GM12878 (cell line): ENCODE measurements at regions of chr2 and their contacts with region 1.

Region 1: DNA sequence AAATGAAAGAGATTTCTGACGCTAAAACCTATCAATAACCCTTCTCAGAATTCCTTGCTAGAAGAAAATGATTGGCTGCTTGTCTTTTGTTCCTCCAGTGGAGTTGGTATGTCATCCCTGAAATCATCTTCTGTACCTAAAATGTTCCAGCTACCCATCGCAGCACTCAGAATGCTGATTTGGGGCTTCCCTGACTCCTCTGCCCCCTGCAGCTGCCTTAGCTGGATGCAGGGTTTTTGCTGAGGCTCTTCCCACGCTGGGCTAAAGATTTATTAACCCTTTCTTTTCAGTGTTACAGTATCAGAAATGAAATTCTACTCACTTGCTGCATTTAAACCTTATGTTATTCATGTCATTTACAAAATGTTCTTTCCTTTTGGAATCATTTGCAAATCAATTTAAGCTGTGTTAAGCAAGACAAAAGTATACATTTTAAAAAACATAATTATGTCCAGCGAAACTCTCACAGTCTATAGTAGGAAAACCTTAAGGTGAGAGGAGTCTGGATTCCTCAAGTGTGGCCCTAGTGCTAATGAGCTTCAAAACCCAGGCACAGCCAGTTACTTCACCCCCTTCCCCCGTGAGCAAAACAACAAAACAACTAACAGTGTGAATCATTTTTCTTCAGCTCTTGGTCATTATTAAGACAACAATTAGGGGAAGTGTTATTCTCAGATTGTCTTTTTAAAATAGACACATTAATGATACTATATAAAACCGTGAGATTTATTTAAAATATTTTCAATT is 32.8 kb downstream of the PKP4 start:
- DNase-seq: no peak
- ATAC-seq: no peak
- H3K4me3 ChIP-seq: no peak overlapping the region
- H3K27ac ChIP-seq: no peak overlapping the region
- H3K4me1 ChIP-seq: no peaks in the 10 kb centered on the region
- H3K27me3 ChIP-seq: no peaks in the 10 kb centered on the region
- CTCF ChIP-seq: no peak
- EP300 ChIP-seq: no peak
- POLR2A ChIP-seq: no peak
- RAD21 ChIP-seq: no peak

Region 2: DNA sequence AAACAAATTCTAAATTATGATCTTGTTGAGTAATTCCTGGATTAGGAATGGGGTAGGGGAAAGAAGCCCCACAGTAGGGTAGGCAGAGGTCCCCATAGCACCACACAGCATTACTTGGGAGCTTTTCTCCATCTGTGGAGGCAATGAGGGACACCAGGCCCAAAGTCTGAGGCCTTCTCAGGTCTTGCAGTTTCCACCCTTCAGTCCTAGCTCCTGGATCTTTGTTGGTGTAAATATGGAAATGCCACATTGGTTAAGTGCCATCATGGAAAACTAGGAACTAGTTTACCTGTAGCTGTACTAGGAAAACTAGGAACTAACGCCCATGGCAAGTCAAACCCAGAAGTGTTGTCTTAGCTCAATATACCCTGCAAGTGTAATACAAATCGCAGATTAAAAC is 192.3 kb after region 1 on chr2:
- CTCF ChIA-PET with region 1: no interaction called
- POLR2A ChIA-PET with region 1: no interaction called
- RAD21 ChIA-PET with region 1: no interaction called
- SMC1A ChIA-PET with region 1: no interaction called
- in situ Hi-C with region 1: no loop called
- intact Hi-C with region 1: loop called (anchors 5 kb)
- DNase-seq: no peak
- ATAC-seq: no peak
- H3K4me3 ChIP-seq: no peak overlapping the region
- H3K27ac ChIP-seq: no peak overlapping the region
- H3K4me1 ChIP-seq: no peaks in the 10 kb centered on the region
- H3K27me3 ChIP-seq: no peaks in the 10 kb centered on the region
- CTCF ChIP-seq: no peak
- EP300 ChIP-seq: no peak
- POLR2A ChIP-seq: no peak
- RAD21 ChIP-seq: no peak